ENCODE measurements at regions of chr1 and their contacts with region 1.

Region 1: GRCh38 chr1:110209715-110210603 is at the start of gene KCNC4:
- DNase-seq: peak; percentile 92 to 95 (median 92)
- ATAC-seq: peak; percentile 78 to 95 (median 93)
- H3K4me3 ChIP-seq: peak within 1 kb of the TSS; percentile 60 to 90 (median 82)
- H3K27ac ChIP-seq: peak within 1 kb of the TSS; percentile 60 to 93 (median 87)
- H3K4me1 ChIP-seq: peaks cover 0 to 52% (median 22%) of the 10 kb centered on the region in 12 donors
- H3K27me3 ChIP-seq: peaks cover 0 to 13% (median 0%) of the 10 kb centered on the region in 9 donors
- CTCF ChIP-seq: peak in 4 of 12 donors; percentile 4 to 16 (median 7)
- POLR2A ChIP-seq: peak in 1 of 2 donors; percentile 58
- total RNA-seq, gene KCNC4: 4.9 to 15.2 (median 6.7) TPM

Region 2: DNA sequence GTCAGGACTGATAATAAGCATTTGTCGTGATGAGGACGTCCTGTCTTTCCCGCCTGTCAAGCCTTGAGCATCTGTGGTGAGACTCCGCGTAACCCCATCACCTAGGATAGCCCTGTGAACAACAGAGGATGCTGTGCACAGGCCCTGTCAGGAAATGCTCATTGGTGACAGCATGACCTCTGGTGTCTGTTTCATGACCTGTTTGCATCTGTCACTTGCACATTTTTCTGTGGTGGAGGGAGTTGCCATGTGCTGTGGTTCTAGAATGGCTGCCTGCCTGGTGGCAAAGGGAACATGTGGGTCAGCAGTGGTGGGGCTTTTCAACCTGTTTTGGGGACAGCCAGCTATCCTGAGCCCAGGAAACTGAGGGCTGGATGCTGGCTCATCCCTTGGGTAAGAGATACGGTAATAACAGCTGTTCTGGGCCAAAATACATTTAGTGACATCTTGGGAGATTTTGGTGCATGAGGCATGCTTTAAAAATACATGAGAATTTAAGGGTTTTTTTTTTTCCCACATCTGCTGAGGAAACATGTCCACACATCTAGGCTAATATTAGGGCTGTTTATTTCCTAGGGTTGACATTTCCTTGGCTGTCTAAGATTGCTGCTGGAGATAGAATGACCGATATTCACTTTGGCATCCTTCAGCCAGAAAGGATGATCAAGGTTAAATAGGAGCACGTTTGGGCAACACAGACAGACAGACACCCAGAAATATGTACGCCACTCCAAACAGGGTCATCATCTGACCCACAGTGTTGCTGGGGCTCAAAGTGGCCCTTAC is 53.1 kb after region 1 on chr1:
- intact Hi-C with region 1: loop called in 3 of 10 experiments (anchors 2 to 10 kb)
- DNase-seq: no peak
- ATAC-seq: peak in 1 of 4 donors; percentile 36
- H3K4me3 ChIP-seq: no peak overlapping the region
- H3K27ac ChIP-seq: peak overlapping the region in 6 of 12 donors; percentile 4 to 55 (median 38)
- H3K4me1 ChIP-seq: peaks cover 0 to 23% (median 4%) of the 10 kb centered on the region in 12 donors
- H3K27me3 ChIP-seq: no peaks in the 10 kb centered on the region
- CTCF ChIP-seq: peak in 1 of 12 donors; percentile 8
- POLR2A ChIP-seq: no peak

Region 3: DNA sequence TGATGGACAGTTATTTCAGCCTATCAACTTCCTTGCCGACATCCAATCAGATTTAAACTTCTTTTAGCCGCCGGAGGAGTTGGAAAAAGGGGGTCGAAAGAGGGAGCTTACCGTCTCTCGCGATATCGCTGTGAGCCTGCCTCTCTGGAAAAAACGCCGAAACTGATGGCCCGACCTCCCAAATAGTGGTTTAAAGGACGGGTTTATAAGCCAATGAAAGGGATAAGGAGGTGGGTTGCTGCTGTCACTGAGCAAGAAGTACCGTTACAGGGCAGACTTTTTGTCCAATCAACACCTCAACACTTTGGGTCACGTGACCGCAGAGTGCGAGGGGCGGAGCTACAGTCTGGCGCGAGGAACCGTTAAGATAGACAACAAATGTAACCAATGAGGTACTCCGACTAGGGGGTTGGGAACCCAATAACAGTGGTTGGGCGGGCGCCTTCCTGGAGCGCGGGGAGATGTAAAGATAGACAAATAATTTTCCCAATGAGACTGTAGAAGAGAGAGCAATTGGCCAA is 129.0 kb after region 1 on chr1 and contains the start of gene RBM15:
- intact Hi-C with region 1: loop called in 1 of 10 experiments (anchors 1 kb)
- DNase-seq: peak; percentile 98 to 99 (median 99)
- ATAC-seq: peak; percentile 82 to 91 (median 88)
- H3K4me3 ChIP-seq: peak within 1 kb of the TSS; percentile 65 to 95 (median 82)
- H3K27ac ChIP-seq: peak within 1 kb of the TSS; percentile 89 to 100 (median 97)
- H3K4me1 ChIP-seq: peaks cover 5 to 61% (median 50%) of the 10 kb centered on the region in 12 donors
- H3K27me3 ChIP-seq: no peaks in the 10 kb centered on the region
- CTCF ChIP-seq: no peak
- POLR2A ChIP-seq: no peak
- total RNA-seq, gene RBM15: 14.1 to 24.4 (median 19.2) TPM

Region 4: DNA sequence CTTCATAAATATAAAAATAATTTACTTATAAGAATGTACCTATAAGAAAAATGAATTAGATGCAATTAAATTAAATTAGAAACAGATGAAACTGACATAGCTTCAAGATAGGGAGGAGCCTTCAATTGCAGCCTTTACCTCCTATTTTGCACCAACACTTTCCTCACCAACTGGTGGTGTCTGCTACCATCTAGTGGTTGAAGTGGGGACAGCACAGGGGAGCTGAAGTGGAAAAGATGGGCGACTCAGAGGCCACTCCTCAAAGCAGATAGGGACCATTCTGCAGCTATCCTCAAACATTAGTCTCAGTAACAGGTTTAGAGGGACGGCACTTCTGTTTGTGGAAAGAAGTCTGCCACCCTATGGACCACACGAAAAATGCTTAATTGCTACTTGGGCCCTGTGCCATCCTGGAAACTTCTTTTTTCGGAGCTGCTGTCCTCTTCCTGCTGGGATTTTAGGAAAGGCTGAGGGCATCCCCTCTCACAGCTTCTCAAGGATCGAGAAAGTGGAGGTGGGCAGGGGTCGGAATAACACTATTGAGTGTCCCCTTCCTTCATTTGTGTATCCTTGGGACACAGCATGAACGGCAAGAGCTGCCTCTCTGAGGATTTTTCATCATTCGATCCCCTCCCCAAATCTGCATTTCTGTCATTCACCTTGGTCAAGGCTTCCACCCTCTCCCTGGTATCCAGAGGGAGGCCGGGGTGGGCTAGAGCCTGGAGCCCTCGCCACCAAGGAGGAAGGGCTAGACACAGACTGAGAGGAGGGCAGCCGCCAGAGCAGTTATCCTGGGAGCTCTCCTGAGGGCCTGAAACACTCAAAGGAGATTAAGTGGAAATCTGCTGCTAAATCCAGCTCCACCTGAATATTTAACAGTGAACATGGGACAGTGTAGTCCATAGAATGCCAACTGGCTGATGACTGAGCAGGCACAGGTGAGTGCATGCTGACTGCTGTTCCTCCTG is 250.6 kb after region 1 on chr1:
- intact Hi-C with region 1: loop called in 2 of 10 experiments (anchors 2 kb)
- DNase-seq: peak in 4 of 5 donors; percentile 42 to 70 (median 64)
- ATAC-seq: peak; percentile 59 to 83 (median 82)
- H3K4me3 ChIP-seq: no peak overlapping the region
- H3K27ac ChIP-seq: no peak overlapping the region
- H3K4me1 ChIP-seq: no peaks in the 10 kb centered on the region
- H3K27me3 ChIP-seq: no peaks in the 10 kb centered on the region
- CTCF ChIP-seq: peak; percentile 89 to 98 (median 94)
- POLR2A ChIP-seq: no peak

Region 5: GRCh38 chr1:110619412-110620249 is 409.7 kb after region 1 on chr1:
- intact Hi-C with region 1: loop called in 1 of 10 experiments (anchors 10 kb)
- DNase-seq: peak; percentile 82 to 93 (median 87)
- ATAC-seq: peak; percentile 60 to 92 (median 89)
- H3K4me3 ChIP-seq: peak overlapping the region in 4 of 12 donors; percentile 14 to 50 (median 26)
- H3K27ac ChIP-seq: no peak overlapping the region
- H3K4me1 ChIP-seq: peaks cover 0 to 17% (median 7%) of the 10 kb centered on the region in 12 donors
- H3K27me3 ChIP-seq: peaks cover 0 to 44% (median 21%) of the 10 kb centered on the region in 9 donors
- CTCF ChIP-seq: peak; percentile 80 to 98 (median 94)
- POLR2A ChIP-seq: no peak